ENCODE measurements at regions of chr22 and their contacts with region 1.

Region 1: GRCh38 chr22:19995626-19996335 is 20.8 kb downstream of the ARVCF start:
- DNase-seq: peak; percentile 28
- H3K4me3 ChIP-seq: no peak overlapping the region
- H3K27ac ChIP-seq: no peak overlapping the region
- H3K4me1 ChIP-seq: peaks cover 23% of the 10 kb centered on the region
- H3K27me3 ChIP-seq: no peaks in the 10 kb centered on the region
- CTCF ChIP-seq: no peak
- POLR2A ChIP-seq: no peak

Region 2: GRCh38 chr22:20020533-20021195 is 24.9 kb after region 1 on chr22 and contains the start of gene TANGO2:
- CTCF ChIA-PET with region 1: interaction called, 4 read pairs
- POLR2A ChIA-PET with region 1: no interaction called
- dilution Hi-C with region 1: no loop called
- intact Hi-C with region 1: loop called (anchors 2 kb)
- DNase-seq: peak; percentile 88
- H3K4me3 ChIP-seq: peak within 1 kb of the TSS; percentile 69 to 82 (median 81)
- H3K27ac ChIP-seq: peak within 1 kb of the TSS; percentile 74
- H3K4me1 ChIP-seq: peaks cover 17% of the 10 kb centered on the region
- H3K27me3 ChIP-seq: no peaks in the 10 kb centered on the region
- CTCF ChIP-seq: no peak
- POLR2A ChIP-seq: peak; percentile 84
- total RNA-seq, gene TANGO2: 33.2 and 40.0 TPM in 2 replicates

Region 3: GRCh38 chr22:20268279-20269012 is 272.7 kb after region 1 on chr22 and contains the start of gene RTN4R:
- CTCF ChIA-PET with region 1: no interaction called
- POLR2A ChIA-PET with region 1: no interaction called
- dilution Hi-C with region 1: no loop called
- intact Hi-C with region 1: no loop called
- DNase-seq: peak; percentile 15
- H3K4me3 ChIP-seq: peak within 1 kb of the TSS in 1 of 3 experiments; percentile 26
- H3K27ac ChIP-seq: no peak within 1 kb of the TSS
- H3K4me1 ChIP-seq: no peaks in the 10 kb centered on the region
- H3K27me3 ChIP-seq: no peaks in the 10 kb centered on the region
- CTCF ChIP-seq: peak; percentile 51 to 73
- POLR2A ChIP-seq: no peak
- total RNA-seq, gene RTN4R: 1.2 and 1.3 TPM in 2 replicates

Measured in endothelial cell of umbilical vein (primary cell).